ENCODE measurements at regions of chr9 and their contacts with region 1.

Region 1: DNA sequence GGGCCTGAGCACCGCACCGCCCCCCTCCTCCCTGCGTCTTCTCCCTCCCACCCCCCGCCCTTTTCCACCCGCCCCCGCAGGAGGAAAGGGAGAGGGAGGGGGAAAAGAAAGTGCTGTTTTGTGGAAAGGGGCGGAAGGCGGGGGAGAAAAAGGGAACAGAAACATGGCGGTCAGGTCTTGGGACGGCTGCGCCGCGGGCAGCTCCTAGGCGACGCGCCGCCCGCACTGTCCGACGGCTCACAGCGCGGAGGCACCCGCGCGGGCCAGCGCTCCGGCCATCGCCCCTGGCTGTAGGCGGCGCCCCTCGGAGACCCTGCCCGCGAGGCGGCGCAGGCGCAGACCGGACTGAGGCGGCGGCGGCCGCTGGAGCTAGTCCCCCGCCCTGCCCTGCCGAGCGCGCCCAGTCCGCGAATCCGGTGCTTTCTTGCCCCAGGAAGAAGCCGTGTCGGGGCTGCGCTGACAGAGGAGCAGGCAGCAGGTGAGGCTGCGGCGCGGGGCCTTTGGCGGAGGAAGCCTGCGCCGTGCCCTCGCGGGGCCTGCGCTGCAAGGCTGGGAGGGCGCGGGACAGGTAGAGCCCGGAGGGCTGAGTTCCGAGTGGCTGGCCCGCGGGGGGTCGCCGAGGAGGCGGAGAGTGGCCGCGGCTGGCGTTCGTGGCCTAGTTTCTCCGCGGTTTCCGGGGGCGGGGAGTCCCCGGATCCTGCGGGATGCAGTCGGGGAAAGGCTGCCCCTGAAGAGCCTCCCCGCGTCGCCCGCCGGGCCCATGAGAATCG is at the start of gene DENND4C:
- DNase-seq: peak; percentile 84
- H3K4me3 ChIP-seq: peak within 1 kb of the TSS; percentile 65 to 99
- H3K27ac ChIP-seq: peak within 1 kb of the TSS; percentile 96 to 99
- H3K4me1 ChIP-seq: no peaks in the 10 kb centered on the region
- H3K27me3 ChIP-seq: no peaks in the 10 kb centered on the region
- CTCF ChIP-seq: peak in 2 of 4 experiments; percentile 35 to 39
- POLR2A ChIP-seq: peak; percentile 87
- total RNA-seq, gene DENND4C: 71.4 to 104 TPM

Region 2: GRCh38 chr9:19102631-19103345 is 127.8 kb before region 1 on chr9 and contains the start of gene HAUS6:
- intact Hi-C with region 1: loop called (anchors 10 kb)
- DNase-seq: peak; percentile 94
- H3K4me3 ChIP-seq: peak within 1 kb of the TSS; percentile 56 to 67
- H3K27ac ChIP-seq: peak within 1 kb of the TSS; percentile 61 to 85
- H3K4me1 ChIP-seq: no peaks in the 10 kb centered on the region
- H3K27me3 ChIP-seq: no peaks in the 10 kb centered on the region
- CTCF ChIP-seq: peak; percentile 16 to 82 (median 58)
- POLR2A ChIP-seq: peak; percentile 67
- total RNA-seq, gene HAUS6: 7.3 to 11.3 TPM

Region 3: DNA sequence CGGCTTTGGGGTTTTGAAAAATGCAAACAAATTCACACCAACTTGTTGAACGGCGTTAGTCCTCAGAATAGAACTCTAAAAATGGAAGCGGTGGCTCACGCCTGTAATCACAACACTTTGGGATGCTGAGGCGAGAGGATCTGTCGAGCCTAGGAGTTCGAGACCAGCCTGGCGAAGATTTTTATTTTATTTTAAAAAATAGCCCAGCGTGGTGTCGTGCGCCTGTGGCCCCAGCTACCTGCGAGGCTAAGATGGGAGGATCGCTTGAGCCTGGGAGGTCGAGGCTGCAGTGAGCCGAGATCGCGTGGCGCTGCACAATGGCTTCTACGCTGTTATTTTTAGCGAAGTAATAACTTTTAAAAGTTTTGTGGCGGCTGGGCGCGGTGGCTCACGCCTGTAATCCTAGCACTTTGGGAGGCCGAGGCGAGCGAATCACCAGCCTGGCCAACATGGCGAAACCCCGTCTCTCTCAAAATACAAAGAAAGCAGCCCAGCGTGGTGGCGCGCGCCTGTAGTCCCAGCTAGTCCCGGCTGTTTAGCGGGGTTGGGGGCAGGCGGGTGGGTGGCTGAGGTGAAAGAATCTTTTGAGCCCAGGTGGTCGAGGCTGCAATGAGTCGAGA is 102.5 kb before region 1 on chr9:
- intact Hi-C with region 1: loop called (anchors 5 kb)
- DNase-seq: no peak
- H3K4me3 ChIP-seq: peak overlapping the region; percentile 66 to 74
- H3K27ac ChIP-seq: peak overlapping the region; percentile 92 to 96
- H3K4me1 ChIP-seq: no peaks in the 10 kb centered on the region
- H3K27me3 ChIP-seq: no peaks in the 10 kb centered on the region
- CTCF ChIP-seq: no peak
- POLR2A ChIP-seq: no peak

Region 4: DNA sequence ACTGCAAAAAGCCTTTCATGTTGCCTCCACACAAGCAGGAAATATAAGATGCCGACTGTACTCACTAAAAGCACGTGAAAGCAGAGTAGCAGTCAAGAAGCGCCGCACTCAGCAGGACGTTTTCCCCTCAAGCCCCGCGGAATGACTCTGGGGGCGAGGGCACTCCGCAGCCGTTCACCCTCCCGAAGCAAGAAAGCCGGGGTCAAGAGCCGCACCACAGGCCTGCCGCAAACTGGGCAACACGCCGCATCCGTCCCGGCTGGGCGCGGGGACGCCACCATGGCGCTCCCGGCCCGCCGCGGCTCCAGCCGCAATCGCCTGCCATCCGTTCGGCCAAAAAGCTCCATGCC is 149.1 kb after region 1 on chr9:
- intact Hi-C with region 1: loop called (anchors 5 kb)
- DNase-seq: no peak
- H3K4me3 ChIP-seq: peak overlapping the region; percentile 52 to 85
- H3K27ac ChIP-seq: peak overlapping the region; percentile 95
- H3K4me1 ChIP-seq: peaks cover 4% of the 10 kb centered on the region
- H3K27me3 ChIP-seq: no peaks in the 10 kb centered on the region
- CTCF ChIP-seq: no peak
- POLR2A ChIP-seq: no peak

Region 5: DNA sequence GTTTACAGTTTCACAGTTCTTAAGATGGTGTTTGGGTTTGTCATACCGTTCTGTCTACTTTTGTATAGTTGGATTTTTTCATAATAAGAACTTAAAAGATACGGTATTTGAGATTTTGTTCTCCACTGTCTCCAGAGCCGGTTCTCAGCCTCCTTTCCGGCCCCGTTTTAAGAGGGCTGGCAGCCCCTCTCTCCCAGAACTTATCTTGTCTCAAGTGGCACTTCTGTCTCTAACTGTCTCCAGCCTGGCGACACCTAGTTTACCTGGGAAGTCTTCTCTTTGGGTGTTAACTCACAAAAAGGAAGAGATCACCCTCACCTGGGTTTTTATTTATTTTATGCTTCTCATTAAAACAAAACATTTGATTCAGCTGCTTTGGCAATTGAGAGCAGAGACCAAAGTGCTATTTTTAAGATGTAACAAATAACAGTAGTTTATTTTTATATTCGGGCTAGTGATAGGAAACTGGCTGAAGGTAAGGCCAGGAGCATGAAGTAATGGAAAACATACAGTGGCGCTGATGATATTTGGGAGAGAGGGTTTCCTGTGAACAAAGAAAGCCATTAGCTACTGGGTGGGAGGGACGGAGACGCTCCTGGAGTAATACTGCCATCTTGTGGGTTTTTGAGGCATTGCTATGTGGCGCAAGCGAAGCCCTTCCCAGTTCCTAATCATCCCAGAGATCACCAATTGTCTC is 226.6 kb after region 1 on chr9:
- intact Hi-C with region 1: loop called (anchors 5 kb)
- DNase-seq: peak; percentile 56
- H3K4me3 ChIP-seq: no peak overlapping the region
- H3K27ac ChIP-seq: no peak overlapping the region
- H3K4me1 ChIP-seq: no peaks in the 10 kb centered on the region
- H3K27me3 ChIP-seq: no peaks in the 10 kb centered on the region
- CTCF ChIP-seq: peak; percentile 89 to 95 (median 90)
- POLR2A ChIP-seq: no peak